BJ (cell line): ENCODE measurements at regions of chr20 and their contacts with region 1.

Region 1: DNA sequence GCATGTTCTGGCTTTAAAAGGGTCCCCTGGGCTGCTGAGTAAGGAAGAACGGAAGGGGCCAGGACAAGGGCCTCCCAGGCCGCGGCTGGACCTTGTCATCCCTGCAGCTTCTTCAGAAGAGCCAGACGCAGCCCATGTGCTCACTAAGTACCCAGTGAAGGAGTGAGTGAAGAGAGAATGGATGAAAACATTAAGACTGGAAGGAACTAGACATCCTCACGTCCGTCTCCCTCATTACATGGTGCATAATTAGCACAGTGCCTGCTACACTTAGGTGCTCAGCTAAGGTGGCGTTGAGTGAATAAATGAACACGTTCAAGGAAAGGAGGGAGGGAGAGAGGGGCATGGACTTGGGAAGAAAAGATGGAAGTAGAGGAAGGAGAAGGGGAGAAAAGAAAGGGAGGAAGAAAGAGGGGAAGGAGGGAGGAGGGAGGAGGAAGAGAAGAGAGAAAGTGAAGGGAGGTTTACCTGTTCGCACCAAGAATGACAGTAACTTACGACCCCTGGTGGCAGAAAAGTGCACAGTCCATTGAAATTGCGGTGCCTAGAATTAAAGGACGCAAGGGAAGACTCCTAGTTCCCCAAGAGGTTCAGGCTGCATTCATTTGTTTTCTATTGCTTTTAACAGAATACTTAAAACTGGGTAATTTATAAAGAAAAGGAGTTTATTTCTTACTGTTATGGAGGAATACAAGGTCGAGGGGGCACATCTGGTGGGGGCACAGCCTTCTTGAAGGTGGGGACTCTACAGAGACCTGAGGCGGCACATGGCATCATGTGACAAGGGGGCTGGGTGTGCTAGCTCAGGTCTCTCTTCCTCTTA is 8.0 kb downstream of the TP53RK start:
- DNase-seq: no peak
- H3K4me3 ChIP-seq: no peak overlapping the region
- H3K27me3 ChIP-seq: no peaks in the 10 kb centered on the region
- CTCF ChIP-seq: peak; percentile 77

Region 2: DNA sequence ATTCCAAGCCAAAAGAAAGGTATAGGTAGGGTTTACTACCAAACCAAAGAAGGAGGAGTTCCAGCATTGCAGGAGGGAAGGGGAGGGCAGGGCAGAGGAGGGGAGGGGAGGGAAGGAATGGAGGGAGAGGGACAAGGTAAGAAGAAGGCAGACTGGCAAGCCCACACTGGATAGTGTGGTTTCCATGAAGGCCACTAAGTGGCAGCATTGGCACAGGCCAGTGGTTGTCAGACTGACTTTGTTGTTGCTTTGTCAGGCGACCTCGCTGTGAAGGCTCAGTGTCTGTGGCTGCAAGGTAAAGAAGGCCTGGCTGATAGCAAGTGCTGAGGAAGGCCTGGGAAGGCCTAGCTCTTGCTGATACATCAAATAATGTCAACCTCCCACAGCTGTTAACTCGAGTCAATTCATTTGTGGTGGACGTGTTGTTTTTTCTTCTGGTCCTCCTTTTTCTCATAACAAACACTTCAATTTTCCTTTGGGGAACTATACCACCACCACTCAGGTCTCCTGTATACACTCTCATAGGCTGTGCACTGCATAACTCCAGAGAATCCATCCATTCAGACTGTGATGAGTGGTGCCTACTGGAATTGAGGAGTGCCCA is 160.2 kb before region 1 on chr20:
- CTCF ChIA-PET with region 1: interaction called, 60 read pairs
- POLR2A ChIA-PET with region 1: no interaction called
- DNase-seq: no peak
- H3K4me3 ChIP-seq: no peak overlapping the region
- H3K27me3 ChIP-seq: no peaks in the 10 kb centered on the region
- CTCF ChIP-seq: peak; percentile 73